Breast epithelium (tissue), 4 donors: ENCODE measurements at regions of chr15 and their contacts with region 1.

Region 1: GRCh38 chr15:27441120-27441519 is 470.1 kb downstream of the GABRG3 start:
- DNase-seq: no peak
- H3K4me3 ChIP-seq: no peak overlapping the region
- H3K27ac ChIP-seq: no peak overlapping the region
- H3K4me1 ChIP-seq: no peaks in the 10 kb centered on the region
- H3K27me3 ChIP-seq: no peaks in the 10 kb centered on the region
- CTCF ChIP-seq: no peak
- POLR2A ChIP-seq: no peak

Region 2: DNA sequence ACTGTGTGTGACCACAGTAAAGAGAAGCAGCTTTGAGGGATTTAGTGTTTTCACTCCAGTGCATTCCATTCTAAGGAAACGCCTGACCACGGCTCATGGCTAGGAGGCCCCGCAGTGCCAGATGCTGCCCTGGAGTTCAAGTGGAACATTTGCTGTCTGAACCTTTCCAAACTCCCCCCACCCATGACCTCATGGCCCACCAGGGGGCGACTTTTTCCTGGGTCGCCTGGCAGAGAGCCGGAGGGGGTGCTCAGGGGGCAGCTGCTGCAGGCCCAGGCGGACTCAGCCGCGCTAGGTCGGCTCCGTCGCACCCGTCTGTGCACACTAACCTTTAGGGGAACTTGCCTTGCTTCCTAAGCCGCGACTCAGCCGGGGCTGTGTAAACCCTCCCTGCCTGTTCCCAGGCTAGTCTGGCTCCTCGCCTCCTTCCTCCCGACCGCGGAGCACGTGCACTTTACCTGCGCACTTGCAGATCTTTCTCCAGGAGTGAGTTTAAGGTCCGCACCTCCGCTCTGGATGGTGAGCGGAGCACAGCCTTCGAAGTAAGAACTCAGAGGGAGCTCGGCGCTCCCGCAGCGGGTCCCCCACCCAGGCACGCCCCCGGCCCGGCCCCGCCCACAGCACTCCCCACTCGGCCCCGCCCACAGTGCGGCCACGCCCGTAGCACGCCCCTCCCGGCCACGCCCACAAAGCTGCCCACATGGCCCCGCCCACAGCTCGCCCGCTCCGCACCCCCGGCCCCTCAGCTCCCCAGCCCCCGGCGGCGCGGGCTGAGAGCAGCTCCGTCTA is 657.8 kb after region 1 on chr15 and contains the start of gene OCA2:
- intact Hi-C with region 1: loop called (anchors 5 kb)
- DNase-seq: peak in 1 of 2 donors; percentile 39
- H3K4me3 ChIP-seq: peak within 1 kb of the TSS; percentile 20 to 55 (median 42)
- H3K27ac ChIP-seq: no peak within 1 kb of the TSS
- H3K4me1 ChIP-seq: no peaks in the 10 kb centered on the region
- H3K27me3 ChIP-seq: peaks cover 0 to 72% of the 10 kb centered on the region in 2 donors
- CTCF ChIP-seq: no peak
- POLR2A ChIP-seq: no peak
- total RNA-seq, gene OCA2: 0.59 to 0.80 (median 0.66) TPM